ENCODE measurements at regions of chr4 and their contacts with region 1.

Region 1: DNA sequence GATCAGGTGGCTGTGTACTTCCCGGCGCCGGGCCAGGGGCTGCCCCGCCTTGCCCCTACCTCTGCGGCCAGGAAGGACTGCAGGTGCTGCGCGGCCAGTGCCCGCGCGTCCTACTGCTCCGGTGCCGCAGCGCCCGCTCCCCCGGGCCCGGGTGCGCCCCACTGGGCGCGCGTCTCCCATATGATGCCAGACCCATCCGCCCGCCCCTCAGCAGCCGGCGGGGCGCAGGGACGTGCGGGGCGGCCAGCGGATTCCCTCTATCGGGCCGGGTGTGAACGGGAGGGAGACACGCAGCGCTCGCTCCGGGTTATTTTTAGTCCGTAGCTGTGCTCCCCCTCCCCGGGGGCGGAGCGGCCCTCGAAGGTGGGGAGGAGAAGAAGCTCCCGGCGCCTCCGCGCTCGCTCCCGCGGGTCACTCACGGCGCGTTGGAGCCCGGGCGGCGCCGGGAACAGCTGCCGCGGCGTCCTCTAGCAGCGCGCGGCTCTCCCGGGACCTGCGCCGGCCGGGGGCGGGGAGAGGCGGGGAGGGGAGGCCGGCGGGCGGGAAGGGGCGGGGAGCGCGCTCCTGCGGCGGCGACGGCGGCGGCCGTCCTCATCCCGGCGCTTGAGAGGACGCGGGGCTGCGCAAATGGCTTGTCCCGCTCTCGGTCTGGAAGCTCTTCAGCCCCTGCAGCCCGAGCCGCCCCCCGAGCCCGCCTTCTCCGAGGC is 103.6 kb downstream of the UCHL1 start:
- DNase-seq: peak; percentile 53

Region 2: DNA sequence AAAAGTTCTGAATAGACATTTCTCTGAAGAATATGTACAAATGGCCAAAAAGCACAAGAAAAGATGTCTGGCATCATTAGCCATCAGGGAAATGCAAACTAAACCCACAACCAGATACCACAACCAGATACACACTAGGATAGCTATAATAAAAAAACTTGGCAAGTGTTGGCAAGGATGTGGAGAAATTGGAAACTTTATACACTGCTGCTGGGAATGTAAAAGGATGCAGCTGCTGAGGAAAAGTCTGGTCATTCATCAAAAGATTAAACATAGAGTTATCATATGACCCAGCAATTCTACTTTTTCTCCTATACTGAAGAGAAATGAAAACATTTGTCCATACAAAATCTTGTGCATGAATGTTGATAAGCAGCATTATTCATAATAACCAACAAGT is 11.3 kb before region 1 on chr4:
- CTCF ChIA-PET with region 1: no interaction called
- POLR2A ChIA-PET with region 1: interaction called, 10 read pairs
- DNase-seq: no peak

Measured in HEK293T (cell line).